H1 (cell line): ENCODE measurements at regions of chr3 and their contacts with region 1.

Region 1: GRCh38 chr3:184574515-184575417 is 13.2 kb downstream of the EPHB3 start:
- DNase-seq: peak in 1 of 2 experiments; percentile 82
- H3K4me3 ChIP-seq: peak overlapping the region in 3 of 4 experiments; percentile 10 to 40 (median 38); a peak in 4 of 8 replicates
- H3K27ac ChIP-seq: no peak overlapping the region
- H3K4me1 ChIP-seq: peaks cover 0 to 30% (median 20%) of the 10 kb centered on the region in 4 experiments; a peak in 6 of 7 replicates
- H3K27me3 ChIP-seq: peaks cover 11 to 40% (median 30%) of the 10 kb centered on the region in 4 experiments
- CTCF ChIP-seq: peak in 1 of 3 experiments; percentile 45; a peak in 1 of 4 replicates
- EP300 ChIP-seq: no peak; a peak in 1 of 3 replicates
- POLR2A ChIP-seq: no peak
- RAD21 ChIP-seq: peak; percentile 6 to 7; a peak in 2 of 4 replicates

Region 2: DNA sequence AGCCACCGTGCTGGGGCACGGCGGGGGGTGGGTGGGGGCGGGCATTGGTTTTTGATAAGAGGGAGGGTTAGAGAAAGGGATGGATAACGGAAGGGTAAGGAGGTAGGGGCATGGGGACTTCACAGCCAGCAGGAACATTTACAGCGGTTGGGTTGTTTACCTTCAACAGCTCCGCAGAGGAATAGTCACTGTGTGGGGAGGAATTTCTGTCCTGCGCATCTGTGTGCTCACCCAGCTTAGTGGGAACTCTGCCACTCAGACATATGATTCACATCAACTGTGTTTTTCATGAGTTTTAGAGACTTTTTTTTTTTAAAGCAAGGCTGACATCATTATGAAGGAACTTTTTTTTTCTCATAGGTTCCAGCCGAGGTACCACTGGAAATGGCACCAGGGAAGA is 175.4 kb before region 1 on chr3:
- CTCF ChIA-PET with region 1: no interaction called
- POLR2A ChIA-PET with region 1: no interaction called
- DNase-seq: no peak
- H3K4me3 ChIP-seq: peak overlapping the region in 1 of 4 experiments; percentile 44; a peak in 2 of 8 replicates
- H3K27ac ChIP-seq: no peak overlapping the region
- H3K4me1 ChIP-seq: peaks cover 0 to 2% (median 0%) of the 10 kb centered on the region in 4 experiments; a peak in 1 of 7 replicates
- H3K27me3 ChIP-seq: peaks cover 0 to 2% (median 0%) of the 10 kb centered on the region in 4 experiments; a peak in 1 of 7 replicates
- CTCF ChIP-seq: no peak
- EP300 ChIP-seq: no peak
- POLR2A ChIP-seq: no peak
- RAD21 ChIP-seq: no peak

Region 3: DNA sequence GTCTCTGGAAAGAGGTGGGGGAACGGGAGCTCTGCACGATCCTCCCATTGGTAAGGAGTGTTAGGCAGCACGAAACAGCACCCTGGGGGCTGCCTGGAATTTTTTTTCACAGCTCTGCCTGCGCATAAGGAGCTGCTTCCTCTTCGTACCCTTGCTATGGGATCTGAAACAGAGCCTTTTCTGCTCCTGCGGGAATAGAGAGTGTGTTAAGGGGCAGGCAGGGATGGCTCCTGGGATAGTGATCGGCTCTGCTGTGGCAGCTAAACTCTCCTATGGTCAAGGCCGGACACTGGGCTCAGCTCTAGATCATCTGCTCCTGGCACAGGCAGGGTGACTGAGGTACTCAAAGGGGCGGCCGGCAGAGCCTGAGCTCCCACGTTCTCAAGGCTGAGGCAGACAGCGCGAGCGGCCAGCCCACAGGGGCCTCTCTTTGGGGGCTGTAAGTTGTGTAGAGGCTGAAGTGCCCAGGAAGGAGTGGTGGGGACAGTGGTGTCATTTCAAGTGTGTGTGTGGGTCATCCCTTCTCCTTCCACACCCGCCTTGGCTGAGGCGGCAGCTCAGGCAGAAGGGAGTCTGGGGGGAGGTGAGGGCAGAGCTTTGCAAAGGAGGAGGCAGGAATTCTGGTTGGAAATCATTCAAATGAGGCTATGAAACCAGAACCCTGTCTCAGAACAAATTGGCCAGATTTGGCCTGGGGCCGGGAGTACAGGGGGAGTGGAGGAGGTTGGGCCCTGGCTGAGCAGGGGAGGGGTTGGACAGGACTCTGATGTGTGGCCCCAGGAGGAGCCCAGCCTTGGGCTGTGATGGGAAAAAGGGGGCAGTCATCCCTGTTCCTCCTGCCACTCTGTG is 17.8 kb after region 1 on chr3:
- CTCF ChIA-PET with region 1: interaction called, 14 read pairs
- POLR2A ChIA-PET with region 1: no interaction called
- DNase-seq: no peak
- H3K4me3 ChIP-seq: no peak overlapping the region
- H3K27ac ChIP-seq: no peak overlapping the region
- H3K4me1 ChIP-seq: peaks cover 4 to 40% (median 13%) of the 10 kb centered on the region in 4 experiments
- H3K27me3 ChIP-seq: peaks cover 0 to 21% (median 20%) of the 10 kb centered on the region in 4 experiments; a peak in 6 of 7 replicates
- CTCF ChIP-seq: no peak
- EP300 ChIP-seq: no peak
- POLR2A ChIP-seq: no peak
- RAD21 ChIP-seq: no peak

Region 4: GRCh38 chr3:184672977-184673870 is 98.5 kb after region 1 on chr3:
- CTCF ChIA-PET with region 1: interaction called, 10 read pairs
- POLR2A ChIA-PET with region 1: no interaction called
- DNase-seq: no peak
- H3K4me3 ChIP-seq: no peak overlapping the region
- H3K27ac ChIP-seq: no peak overlapping the region
- H3K4me1 ChIP-seq: 0 out of 7 replicates have a peak, but pooled peaks cover 0 to under 1% (median 0%) of the 10 kb centered on the region in 4 experiments
- H3K27me3 ChIP-seq: 0 out of 7 replicates have a peak, but pooled peaks cover 0 to 2% (median 0%) of the 10 kb centered on the region in 4 experiments
- CTCF ChIP-seq: no peak
- EP300 ChIP-seq: no peak
- POLR2A ChIP-seq: no peak
- RAD21 ChIP-seq: no peak

Region 5: GRCh38 chr3:184748219-184749135 is 173.7 kb after region 1 on chr3:
- CTCF ChIA-PET with region 1: interaction called, 10 read pairs
- POLR2A ChIA-PET with region 1: no interaction called
- DNase-seq: no peak
- H3K4me3 ChIP-seq: no peak overlapping the region
- H3K27ac ChIP-seq: no peak overlapping the region
- H3K4me1 ChIP-seq: peaks cover 4 to 14% (median 5%) of the 10 kb centered on the region in 4 experiments; a peak in 5 of 7 replicates
- H3K27me3 ChIP-seq: peaks cover 0 to 4% (median 1%) of the 10 kb centered on the region in 4 experiments; a peak in 2 of 7 replicates
- CTCF ChIP-seq: peak; percentile 63 to 81 (median 69)
- EP300 ChIP-seq: no peak
- POLR2A ChIP-seq: no peak
- RAD21 ChIP-seq: peak; percentile 74 to 80